Activated CD4-positive, alpha-beta T cell treated with anti-CD3 and anti-CD28 coated beads, Interleukin-2, amount 10 ng/mL, durations not matched to agents 24 days and 14 days (primary cell): ENCODE measurements at regions of chr12 and their contacts with region 1.

Region 1: DNA sequence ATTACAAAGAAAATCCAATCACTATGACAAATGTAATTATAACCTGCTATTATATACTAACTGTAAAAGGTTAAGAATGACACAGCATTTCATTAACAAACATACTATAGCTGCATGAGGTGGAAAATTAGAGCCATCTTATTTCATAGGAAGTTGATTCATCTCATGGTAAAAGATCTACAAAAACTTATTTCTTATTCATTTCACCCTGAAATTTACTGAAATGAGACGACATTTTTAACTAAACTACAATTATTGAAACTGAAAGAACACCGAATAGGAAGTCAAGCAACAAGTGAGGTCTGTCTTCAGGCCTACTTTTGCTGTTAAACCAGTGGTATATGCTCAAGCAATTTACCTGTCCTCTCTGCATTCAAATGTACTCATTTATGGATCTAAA is 87.2 kb downstream of the CEP83 start:
- DNase-seq: no peak
- H3K4me3 Mint-ChIP-seq: peak overlapping the region; percentile 35
- H3K27ac Mint-ChIP-seq: peak overlapping the region; percentile 85
- H3K4me1 Mint-ChIP-seq: peaks cover 23% of the 10 kb centered on the region
- H3K27me3 Mint-ChIP-seq: no peaks in the 10 kb centered on the region

Region 2: DNA sequence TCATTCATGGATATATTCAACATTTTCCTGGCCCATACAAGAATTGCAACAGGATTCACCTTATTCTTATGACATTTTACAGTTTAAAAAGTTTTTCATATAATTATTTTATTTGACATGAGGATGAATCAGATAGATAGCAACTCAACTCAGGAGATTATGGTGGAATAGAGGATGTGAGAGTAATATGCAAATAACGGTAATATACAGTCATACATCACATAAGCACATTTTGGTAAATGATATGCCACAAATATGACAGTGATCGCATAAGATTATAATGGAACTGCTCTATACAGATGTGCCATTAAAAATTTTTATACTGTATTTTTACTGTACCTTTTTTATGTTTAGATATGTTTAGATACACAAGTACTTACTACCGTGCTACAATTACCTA is 719.4 kb before region 1 on chr12:
- intact Hi-C with region 1: no loop called
- DNase-seq: no peak
- H3K4me3 Mint-ChIP-seq: no peak overlapping the region
- H3K27ac Mint-ChIP-seq: no peak overlapping the region
- H3K4me1 Mint-ChIP-seq: no peaks in the 10 kb centered on the region
- H3K27me3 Mint-ChIP-seq: peaks cover 4% of the 10 kb centered on the region

Region 3: DNA sequence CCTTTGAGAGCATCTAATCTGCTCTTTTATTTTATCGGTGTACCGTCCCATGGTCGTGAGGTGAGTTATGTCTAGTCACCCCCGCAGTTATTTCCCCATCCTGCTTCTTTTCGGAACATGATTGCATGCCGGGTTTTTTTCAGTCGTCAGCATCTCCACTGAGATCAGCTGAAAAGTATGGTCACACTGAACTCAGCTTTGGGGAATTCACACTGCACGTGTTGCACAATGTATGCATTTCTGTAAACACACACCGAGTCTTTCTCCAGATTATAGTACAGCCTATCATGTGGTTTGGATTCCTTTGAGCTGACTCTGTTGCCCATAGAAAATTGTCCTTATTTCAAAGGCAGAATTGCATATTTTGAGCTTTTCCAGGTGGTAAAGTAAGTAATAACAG is 199.5 kb before region 1 on chr12:
- intact Hi-C with region 1: loop called (anchors 10 kb)
- DNase-seq: no peak
- H3K4me3 Mint-ChIP-seq: no peak overlapping the region
- H3K27ac Mint-ChIP-seq: no peak overlapping the region
- H3K4me1 Mint-ChIP-seq: peaks cover 54% of the 10 kb centered on the region
- H3K27me3 Mint-ChIP-seq: no peaks in the 10 kb centered on the region

Region 4: DNA sequence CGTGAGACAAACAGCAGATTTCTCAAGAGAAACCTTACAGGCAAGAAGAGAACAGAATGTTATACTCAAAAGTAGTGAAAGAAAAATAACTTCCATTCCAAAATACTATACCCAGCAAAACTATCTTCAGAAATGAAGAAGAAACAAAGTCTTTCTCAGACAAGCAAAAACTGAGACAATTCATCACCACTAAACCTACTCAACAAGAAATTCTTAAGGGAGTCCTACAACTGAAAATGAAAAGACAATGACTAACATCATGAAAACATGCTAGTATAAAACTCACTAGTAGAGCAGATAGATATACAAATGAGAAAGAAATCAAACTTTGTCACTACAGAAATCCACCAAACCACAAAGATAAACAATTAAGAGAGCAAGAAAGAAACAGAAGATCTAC is 19.3 kb before region 1 on chr12:
- intact Hi-C with region 1: no loop called
- DNase-seq: no peak
- H3K4me3 Mint-ChIP-seq: no peak overlapping the region
- H3K27ac Mint-ChIP-seq: peak overlapping the region; percentile 7
- H3K4me1 Mint-ChIP-seq: peaks cover 3% of the 10 kb centered on the region
- H3K27me3 Mint-ChIP-seq: no peaks in the 10 kb centered on the region

Region 5: GRCh38 chr12:96219698-96220206 is 1847.3 kb after region 1 on chr12:
- intact Hi-C with region 1: no loop called
- DNase-seq: no peak
- H3K4me3 Mint-ChIP-seq: no peak overlapping the region
- H3K27ac Mint-ChIP-seq: no peak overlapping the region
- H3K4me1 Mint-ChIP-seq: peaks cover 27% of the 10 kb centered on the region
- H3K27me3 Mint-ChIP-seq: no peaks in the 10 kb centered on the region